Activated CD4-positive, alpha-beta T cell treated with anti-CD3 and anti-CD28 coated beads, Interleukin-2, amount 10 ng/mL, durations not matched to agents 24 days and 14 days (primary cell): ENCODE measurements at regions of chr11 and their contacts with region 1.

Region 1: DNA sequence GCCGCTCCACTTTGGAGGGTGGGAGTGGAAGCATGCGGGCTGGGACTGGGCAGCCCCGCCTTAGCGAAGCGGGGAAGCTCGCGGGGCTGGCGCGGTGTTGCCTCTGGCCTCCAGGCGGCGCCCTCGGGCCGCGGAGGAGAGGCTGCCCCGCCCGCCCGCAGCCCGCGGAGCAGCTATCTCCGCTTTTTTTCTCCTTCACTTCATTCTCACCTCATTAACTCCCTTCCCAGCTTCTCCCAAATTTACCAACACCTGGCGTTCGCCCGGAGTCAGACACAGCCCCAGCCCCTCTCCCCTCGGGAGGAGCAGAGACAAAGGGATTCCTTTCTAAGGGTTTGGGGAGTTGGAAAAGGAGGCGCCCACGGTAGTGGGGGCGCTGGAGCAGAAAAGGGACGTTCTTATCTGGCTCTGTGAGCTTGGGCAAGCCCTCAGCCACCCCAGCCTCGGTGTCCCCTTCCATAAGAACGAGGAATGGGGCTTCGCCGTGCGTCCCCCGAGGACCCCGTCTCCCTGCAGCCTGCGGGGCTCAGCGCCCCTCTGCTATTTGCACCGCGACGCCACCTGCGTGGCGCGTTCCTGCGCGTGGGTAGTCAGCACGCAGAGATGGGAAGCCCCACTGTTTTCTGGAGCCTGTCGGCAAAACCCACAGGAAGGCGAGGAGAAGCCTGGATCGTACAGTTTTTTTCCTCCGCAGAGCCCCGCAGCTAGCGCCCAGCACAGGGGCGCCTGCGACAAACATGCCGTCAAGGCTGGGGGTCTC is 1.5 kb upstream of the WNT11 start:
- DNase-seq: peak; percentile 95
- H3K4me3 Mint-ChIP-seq: peak overlapping the region; percentile 84
- H3K27ac Mint-ChIP-seq: no peak overlapping the region
- H3K4me1 Mint-ChIP-seq: peaks cover 17% of the 10 kb centered on the region
- H3K27me3 Mint-ChIP-seq: peaks cover 58% of the 10 kb centered on the region

Region 2: DNA sequence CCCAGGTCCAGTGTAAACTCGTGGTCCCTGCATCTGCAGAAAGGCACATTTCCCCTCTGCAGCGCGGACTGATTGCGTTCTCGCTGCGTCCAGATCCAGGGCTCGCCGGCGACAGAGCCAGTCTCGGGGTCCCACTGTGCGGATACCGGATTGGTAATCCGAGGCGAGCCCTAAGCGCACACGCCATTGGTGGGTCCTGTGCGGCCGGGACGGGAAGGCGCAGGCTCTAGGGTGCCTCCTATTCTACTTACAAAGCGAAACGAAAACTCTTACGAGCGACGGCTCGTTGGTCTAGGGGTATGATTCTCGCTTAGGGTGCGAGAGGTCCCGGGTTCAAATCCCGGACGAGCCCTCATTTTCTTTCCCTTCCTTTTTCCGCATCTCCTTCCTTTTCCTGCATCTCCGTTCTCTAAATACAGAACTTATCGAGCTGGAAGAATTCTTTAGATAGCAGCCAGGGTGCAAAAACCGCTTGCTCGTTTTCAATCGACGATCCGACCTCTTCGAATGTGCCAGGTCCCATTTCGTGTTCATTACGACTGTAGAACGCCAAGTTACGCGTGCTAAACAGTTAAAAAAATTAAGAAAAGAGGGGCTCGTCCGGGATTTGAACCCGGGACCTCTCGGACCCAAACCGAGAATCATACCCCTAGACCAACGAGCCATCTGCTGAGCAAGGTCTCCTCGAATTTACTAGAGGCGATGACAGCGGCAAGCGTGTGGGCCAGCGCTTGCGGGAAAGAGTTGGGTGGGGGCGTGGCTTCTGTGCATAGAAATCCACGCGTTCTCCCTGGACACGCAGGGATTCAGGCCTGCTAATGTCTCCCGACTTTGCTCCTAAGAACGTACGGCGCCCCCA is 27.6 kb after region 1 on chr11:
- intact Hi-C with region 1: loop called (anchors 1 kb)
- DNase-seq: peak; percentile 98
- H3K4me3 Mint-ChIP-seq: peak overlapping the region; percentile 96
- H3K27ac Mint-ChIP-seq: peak overlapping the region; percentile 96
- H3K4me1 Mint-ChIP-seq: peaks cover 48% of the 10 kb centered on the region
- H3K27me3 Mint-ChIP-seq: peaks cover 13% of the 10 kb centered on the region

Region 3: DNA sequence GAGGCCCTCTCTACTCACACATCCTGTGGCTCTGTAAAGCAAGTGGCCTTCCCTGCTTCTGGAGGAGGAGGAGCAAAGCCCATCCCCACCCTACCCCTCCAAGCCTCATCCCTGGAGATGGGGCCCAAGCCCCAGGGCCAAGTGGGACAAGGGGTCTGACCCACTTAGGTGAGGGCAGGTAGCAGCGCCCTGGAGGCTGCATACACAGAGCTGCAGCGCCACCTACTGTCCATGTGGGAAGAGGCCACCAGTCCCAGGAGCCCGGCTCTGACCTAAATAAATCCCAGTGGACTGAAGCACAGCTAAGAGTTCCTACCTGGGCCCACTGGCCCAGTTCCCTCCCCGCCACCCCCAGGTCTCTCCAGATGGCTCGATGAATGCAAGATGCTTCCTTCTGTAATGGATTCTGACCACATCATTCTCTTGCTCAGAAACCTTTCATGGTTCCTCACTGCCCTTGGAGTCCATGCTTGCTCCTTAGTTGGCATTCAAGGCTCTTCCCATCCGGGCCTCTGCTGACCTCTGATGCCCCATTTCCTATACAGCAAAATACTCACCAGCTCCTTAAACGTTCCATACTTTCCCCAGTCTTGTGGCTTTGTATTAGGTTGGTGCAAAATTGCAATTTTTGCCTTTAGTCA is 111.0 kb after region 1 on chr11:
- intact Hi-C with region 1: loop called (anchors 1 kb)
- DNase-seq: peak; percentile 94
- H3K4me3 Mint-ChIP-seq: no peak overlapping the region
- H3K27ac Mint-ChIP-seq: no peak overlapping the region
- H3K4me1 Mint-ChIP-seq: peaks cover 14% of the 10 kb centered on the region
- H3K27me3 Mint-ChIP-seq: peaks cover 42% of the 10 kb centered on the region

Region 4: DNA sequence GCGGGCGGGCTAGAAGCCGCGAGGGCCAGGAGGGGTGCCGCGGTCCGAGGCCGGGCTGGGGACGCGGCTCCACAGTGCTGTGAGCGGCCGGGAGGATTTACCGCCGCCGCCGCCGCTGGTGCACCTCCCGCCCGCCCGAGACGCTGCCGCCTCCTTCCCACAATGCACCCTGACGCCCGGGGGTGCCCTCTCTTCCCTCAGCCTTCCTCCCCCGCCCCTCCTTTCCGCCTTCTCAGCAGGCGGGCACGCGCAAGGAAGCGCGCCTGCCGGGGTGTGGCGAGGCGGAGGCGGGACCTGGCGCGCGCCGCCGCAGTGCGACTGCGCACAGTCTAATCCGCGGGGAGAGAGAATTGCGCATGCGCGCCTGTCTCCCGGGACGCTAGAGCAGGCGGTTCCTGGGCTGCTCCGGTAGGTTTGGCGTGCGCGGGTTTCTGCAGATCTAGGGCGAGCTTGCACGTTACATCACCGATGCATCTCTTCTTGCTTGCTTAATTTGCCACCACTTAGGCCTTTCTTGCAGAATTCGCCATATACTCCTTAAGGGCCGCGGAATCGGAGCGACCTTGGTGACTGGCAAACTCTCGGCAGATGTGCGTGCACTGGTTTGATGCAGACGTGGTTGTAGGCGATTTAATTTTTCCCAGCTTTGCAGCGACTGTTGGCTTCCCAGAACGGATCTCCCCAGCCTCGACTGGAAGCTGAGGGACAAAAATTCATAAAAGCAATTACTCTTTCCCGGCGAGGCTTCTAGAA is 173.3 kb after region 1 on chr11 and contains the starts of genes GVQW3 and THAP12:
- intact Hi-C with region 1: loop called (anchors 2 kb)
- DNase-seq: peak; percentile 99
- H3K4me3 Mint-ChIP-seq: peak within 1 kb of the TSS; percentile 95
- H3K27ac Mint-ChIP-seq: peak within 1 kb of the TSS; percentile 91
- H3K4me1 Mint-ChIP-seq: peaks cover 40% of the 10 kb centered on the region
- H3K27me3 Mint-ChIP-seq: no peaks in the 10 kb centered on the region
- total RNA-seq, gene GVQW3: 3.7 and 4.3 TPM in 2 replicates
- total RNA-seq, gene THAP12: 77.8 and 80.9 TPM in 2 replicates

Region 5: DNA sequence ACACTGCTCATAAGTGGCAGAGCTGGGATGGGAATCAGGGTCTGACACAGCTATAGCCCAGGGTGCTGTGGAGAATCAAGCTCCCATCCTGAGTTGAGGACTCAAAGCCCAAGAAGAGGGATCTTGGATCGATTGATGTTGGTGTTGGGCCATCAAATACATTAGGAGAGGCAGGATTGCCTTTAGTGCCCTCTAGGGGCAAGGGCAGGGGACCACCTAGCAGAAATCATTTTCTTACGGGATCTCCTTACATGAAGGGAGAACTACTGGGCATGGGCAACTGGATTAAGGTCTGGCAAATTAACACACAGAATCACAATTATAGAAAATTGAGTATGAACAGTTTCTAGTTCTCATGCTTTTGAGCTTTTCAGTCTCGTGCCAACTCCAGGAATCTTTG is 212.1 kb after region 1 on chr11:
- intact Hi-C with region 1: loop called (anchors 5 kb)
- DNase-seq: peak; percentile 60
- H3K4me3 Mint-ChIP-seq: no peak overlapping the region
- H3K27ac Mint-ChIP-seq: no peak overlapping the region
- H3K4me1 Mint-ChIP-seq: peaks cover 7% of the 10 kb centered on the region
- H3K27me3 Mint-ChIP-seq: peaks cover 9% of the 10 kb centered on the region

Region 6: DNA sequence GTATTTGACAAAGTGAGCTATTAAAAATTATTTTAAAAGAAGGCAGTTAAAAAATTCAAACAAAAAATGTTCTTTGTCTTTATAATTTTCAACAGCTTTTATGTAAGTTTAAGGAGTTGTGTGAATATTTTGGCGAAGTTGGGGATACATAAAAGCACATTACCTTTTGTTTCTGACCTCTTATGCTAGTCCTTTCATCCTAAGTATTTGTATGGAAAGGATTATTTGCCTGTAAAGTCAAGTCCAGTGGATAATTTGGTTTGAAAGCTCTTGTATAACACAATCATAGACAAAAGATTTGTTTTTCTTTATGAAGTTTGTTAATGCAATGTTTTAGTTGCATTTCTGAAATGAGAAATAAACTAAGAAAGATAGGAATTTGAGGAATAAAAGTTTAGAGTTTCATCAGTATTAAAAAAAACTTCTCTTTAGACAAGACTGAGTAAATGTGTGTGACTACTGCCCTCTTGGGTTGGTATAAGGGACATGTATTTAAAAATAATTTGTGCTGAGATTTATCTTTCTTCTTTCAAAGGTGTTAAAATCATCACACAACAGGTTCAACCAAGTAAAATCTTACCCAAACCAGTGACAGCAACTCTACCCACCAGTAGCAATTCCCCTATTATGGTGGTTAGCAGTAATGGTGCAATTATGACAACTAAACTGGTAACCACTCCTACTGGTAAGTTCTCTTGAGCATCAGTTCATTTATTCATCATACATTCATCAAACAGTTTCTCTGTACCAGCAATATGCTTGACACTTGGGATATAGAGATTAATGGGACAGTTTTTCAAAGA is 305.2 kb after region 1 on chr11:
- intact Hi-C with region 1: loop called (anchors 5 kb)
- DNase-seq: no peak
- H3K4me3 Mint-ChIP-seq: no peak overlapping the region
- H3K27ac Mint-ChIP-seq: no peak overlapping the region
- H3K4me1 Mint-ChIP-seq: no peaks in the 10 kb centered on the region
- H3K27me3 Mint-ChIP-seq: no peaks in the 10 kb centered on the region

Region 7: DNA sequence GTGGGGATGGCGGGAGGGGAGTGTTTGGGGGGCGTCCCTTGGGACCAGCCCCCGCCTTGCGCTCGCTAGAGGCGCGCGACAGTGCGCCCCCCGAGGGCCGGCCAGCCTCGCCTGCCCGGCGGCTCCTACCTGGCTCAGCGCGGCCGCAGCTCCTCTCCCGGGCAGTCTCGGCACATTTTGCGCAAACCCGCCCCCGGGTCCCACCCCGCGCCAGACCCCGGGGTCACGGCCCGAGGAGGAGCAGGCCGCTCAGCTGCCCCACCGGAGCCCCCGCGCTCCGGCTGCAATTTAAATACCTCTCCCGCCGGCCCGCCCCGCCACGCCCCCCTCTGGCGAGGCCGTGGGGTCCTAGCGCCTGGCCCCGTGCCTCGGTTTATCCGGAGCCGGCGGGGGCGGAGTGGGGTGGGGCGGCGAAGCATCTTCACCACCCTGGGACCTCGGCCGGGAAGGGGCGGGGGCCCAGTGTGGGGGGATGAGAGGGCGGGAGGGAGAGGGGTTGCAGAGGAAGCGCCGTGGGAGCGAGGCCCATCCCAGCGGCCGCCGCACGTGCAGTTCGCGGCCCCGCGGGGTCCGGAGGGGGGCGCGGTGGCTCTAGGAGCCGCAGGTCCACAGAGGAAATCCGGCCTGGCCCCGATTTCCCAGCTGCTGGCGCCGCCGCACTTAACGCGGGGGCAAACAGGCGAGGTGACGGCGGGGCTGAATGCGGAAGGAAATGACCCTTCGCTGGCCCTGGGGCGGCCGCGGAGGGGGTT is 462.8 kb after region 1 on chr11 and contains the start of gene LRRC32:
- intact Hi-C with region 1: loop called (anchors 5 kb)
- DNase-seq: peak; percentile 77
- H3K4me3 Mint-ChIP-seq: peak within 1 kb of the TSS; percentile 79
- H3K27ac Mint-ChIP-seq: no peak within 1 kb of the TSS
- H3K4me1 Mint-ChIP-seq: peaks cover 34% of the 10 kb centered on the region
- H3K27me3 Mint-ChIP-seq: peaks cover 28% of the 10 kb centered on the region
- total RNA-seq, gene LRRC32: 6.6 and 8.6 TPM in 2 replicates